HEK293T (cell line): ENCODE measurements at regions of chr6 and their contacts with region 1.

Region 1: GRCh38 chr6:73743556-73743955 is 47.6 kb downstream of the CD109 start:
- DNase-seq: no peak

Region 2: GRCh38 chr6:73722318-73723060 is 21.1 kb before region 1 on chr6:
- CTCF ChIA-PET with region 1: no interaction called
- POLR2A ChIA-PET with region 1: no interaction called
- DNase-seq: no peak

Region 3: DNA sequence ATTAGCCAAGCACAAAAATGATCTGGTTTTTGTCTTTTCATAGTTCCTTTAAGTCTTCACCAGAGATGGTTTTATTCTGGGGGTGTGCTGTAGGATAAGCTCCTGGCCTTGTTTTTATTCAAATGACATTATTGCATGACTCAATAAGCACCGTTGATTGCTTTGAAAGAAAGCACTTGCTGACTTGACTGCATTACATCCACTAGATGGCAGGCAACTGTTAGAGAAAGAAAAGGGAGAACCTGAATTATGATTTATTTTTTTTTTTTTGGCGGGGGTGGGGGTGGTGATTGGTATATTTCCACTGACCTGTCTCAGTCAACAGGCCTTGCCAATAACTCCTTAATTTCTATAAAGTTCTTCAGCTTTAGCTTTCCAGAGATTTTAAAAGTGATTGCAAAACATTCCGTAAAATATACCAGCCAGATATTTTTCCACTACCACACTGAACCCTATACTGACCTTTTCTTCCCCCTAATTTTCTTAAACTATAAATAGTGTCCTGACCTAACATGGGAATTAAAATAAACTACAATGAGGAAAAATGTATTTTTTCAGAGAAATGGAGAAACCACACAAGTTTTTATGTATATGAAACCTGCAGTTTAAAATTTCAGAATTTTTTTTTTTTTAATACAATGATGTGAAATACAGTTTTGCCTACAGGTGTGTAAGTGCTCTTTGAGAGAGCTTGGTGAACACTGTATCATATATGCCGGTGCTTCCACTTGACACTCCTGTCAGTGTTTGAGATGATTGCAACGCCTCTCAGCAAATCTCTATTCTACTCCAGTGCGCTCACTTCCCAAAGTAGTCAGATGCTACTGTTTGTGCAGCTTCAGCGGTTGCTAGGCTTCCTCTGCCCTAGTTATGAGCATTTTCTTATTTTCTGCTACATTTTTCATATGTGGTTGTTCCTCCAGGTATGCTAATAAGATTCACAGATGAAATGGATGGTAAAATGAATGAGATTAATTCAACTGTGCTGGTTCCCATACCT is 226.7 kb after region 1 on chr6:
- CTCF ChIA-PET with region 1: interaction called, 11 read pairs
- POLR2A ChIA-PET with region 1: no interaction called
- DNase-seq: peak; percentile 23